Activated CD8-positive, alpha-beta T cell treated with anti-CD3 and anti-CD28 coated beads for 36 hours (primary cell): ENCODE measurements at regions of chr6 and their contacts with region 1.

Region 1: GRCh38 chr6:26156076-26156849 is 69.0 kb downstream of the HFE start:
- DNase-seq: peak; percentile 87
- ATAC-seq: peak; percentile 41
- H3K4me3 Mint-ChIP-seq: peak overlapping the region; percentile 88
- H3K27ac Mint-ChIP-seq: peak overlapping the region; percentile 93
- H3K4me1 Mint-ChIP-seq: peaks cover 36% of the 10 kb centered on the region
- H3K27me3 Mint-ChIP-seq: peaks cover 14% of the 10 kb centered on the region
- CTCF ChIP-seq: no peak

Region 2: GRCh38 chr6:26006086-26006939 is 149.9 kb before region 1 on chr6:
- CTCF ChIA-PET with region 1: no interaction called
- POLR2A ChIA-PET with region 1: no interaction called
- intact Hi-C with region 1: no loop called
- DNase-seq: no peak
- ATAC-seq: no peak
- H3K4me3 Mint-ChIP-seq: no peak overlapping the region
- H3K27ac Mint-ChIP-seq: no peak overlapping the region
- H3K4me1 Mint-ChIP-seq: no peaks in the 10 kb centered on the region
- H3K27me3 Mint-ChIP-seq: no peaks in the 10 kb centered on the region
- CTCF ChIP-seq: no peak

Region 3: DNA sequence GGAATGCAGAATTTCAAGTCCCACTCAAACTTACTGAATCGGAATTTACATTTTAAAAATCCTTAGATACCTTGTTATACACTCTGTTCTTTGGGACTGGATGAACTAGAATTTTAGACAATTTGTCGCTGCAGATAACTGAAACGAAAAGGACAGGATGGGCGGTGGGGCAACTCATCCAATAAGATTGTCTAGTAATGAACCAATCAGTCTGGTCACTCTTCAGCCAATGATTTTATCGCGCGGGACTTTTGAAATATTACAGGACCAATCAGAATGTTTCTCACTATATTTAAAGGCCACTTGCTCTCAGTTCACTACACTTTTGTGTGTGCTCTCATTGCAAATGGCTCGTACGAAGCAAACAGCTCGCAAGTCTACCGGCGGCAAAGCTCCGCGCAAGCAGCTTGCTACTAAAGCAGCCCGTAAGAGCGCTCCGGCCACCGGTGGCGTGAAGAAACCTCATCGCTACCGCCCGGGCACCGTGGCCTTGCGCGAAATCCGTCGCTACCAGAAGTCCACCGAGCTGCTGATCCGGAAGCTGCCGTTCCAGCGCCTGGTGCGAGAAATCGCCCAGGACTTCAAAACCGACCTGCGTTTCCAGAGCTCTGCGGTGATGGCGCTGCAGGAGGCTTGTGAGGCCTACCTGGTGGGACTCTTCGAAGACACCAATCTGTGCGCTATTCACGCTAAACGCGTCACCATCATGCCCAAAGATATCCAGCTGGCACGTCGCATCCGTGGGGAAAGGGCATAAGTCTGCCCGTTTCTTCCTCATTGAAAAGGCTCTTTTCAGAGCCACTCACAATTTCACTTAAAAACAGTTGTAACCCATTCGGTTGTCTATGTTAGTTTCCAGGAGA is 111.0 kb before region 1 on chr6:
- CTCF ChIA-PET with region 1: no interaction called
- POLR2A ChIA-PET with region 1: interaction called, 59 read pairs
- intact Hi-C with region 1: no loop called
- DNase-seq: peak; percentile 85
- ATAC-seq: peak; percentile 63
- H3K4me3 Mint-ChIP-seq: peak overlapping the region; percentile 76
- H3K27ac Mint-ChIP-seq: peak overlapping the region; percentile 96
- H3K4me1 Mint-ChIP-seq: peaks cover 10% of the 10 kb centered on the region
- H3K27me3 Mint-ChIP-seq: no peaks in the 10 kb centered on the region
- CTCF ChIP-seq: no peak

Region 4: GRCh38 chr6:26122793-26123674 is 33.2 kb before region 1 on chr6:
- CTCF ChIA-PET with region 1: interaction called, 14 read pairs
- POLR2A ChIA-PET with region 1: interaction called, 1,225 read pairs
- intact Hi-C with region 1: loop called (anchors 1 kb)
- DNase-seq: peak; percentile 98
- ATAC-seq: peak; percentile 60
- H3K4me3 Mint-ChIP-seq: peak overlapping the region; percentile 84
- H3K27ac Mint-ChIP-seq: peak overlapping the region; percentile 98
- H3K4me1 Mint-ChIP-seq: peaks cover 27% of the 10 kb centered on the region
- H3K27me3 Mint-ChIP-seq: no peaks in the 10 kb centered on the region
- CTCF ChIP-seq: no peak

Region 5: DNA sequence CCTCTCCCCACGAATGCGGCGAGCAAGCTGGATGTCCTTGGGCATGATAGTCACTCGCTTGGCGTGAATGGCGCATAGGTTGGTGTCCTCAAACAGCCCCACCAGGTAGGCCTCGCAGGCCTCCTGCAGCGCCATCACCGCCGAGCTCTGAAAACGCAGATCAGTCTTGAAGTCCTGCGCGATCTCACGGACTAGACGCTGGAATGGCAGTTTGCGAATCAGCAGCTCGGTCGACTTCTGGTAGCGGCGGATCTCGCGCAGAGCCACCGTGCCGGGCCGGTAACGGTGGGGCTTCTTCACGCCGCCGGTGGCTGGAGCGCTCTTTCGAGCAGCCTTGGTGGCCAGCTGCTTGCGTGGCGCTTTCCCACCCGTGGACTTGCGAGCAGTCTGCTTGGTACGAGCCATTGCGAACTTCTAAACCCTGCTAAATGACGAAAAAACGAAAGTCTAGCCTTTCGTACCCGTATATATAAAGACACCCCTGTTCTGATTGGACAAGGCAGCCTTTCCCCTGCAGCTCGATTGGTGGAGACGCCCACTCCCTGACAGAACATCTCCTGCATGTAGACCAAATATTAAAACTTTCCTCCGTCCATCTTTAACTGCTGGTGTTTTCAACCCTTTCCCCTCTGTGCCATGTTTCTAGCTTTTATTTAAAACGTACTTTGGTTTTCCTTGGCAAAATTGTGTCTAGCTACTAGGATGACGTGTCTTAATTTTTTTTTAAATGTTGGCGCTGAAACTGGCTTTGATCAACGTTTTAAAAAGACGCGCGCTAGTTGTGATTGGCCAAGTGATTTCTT is 40.8 kb after region 1 on chr6:
- CTCF ChIA-PET with region 1: interaction called, 4 read pairs
- POLR2A ChIA-PET with region 1: interaction called, 826 read pairs
- intact Hi-C with region 1: loop called (anchors 5 kb)
- DNase-seq: peak; percentile 86
- ATAC-seq: peak; percentile 48
- H3K4me3 Mint-ChIP-seq: peak overlapping the region; percentile 96
- H3K27ac Mint-ChIP-seq: peak overlapping the region; percentile 96
- H3K4me1 Mint-ChIP-seq: peaks cover 24% of the 10 kb centered on the region
- H3K27me3 Mint-ChIP-seq: no peaks in the 10 kb centered on the region
- CTCF ChIP-seq: no peak

Region 6: DNA sequence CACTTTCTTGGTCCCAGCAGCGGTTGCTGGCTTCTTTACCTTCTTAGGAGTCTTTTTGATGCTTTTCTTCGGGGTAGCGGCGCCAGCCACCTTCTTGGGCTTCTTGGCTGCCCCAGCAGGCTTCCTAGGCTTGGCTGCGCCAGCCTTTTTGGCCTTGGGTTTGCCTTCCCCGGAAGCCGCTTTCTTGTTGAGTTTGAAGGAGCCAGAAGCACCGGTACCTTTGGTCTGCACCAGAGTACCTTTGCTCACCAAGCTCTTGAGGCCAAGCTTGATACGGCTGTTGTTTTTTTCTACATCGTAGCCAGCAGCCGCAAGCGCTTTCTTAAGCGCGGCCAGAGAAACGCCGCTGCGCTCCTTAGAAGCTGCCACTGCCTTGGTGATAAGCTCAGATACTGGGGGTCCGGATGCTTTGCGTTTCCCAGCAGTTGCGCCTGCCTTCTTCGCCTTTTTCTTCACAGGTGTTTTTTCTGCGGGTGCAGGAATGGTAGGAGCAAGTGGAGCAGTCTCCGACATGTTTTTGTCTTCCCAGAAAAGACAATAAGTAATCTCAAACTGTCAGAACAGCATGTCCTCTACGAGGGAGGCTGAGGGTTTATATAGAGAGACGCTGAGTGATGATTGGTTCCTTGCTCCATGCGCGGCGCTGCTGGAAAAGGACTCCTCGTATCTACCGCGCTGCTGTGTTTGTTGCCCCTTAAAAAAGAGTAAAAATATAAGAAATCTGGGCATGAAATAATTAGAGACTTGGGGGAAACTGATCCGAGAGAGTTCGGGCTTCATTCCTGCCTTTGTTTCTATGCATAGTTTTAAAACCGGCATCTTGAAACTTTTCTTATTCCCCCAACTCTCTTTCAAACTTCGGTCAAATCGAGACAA is 78.4 kb after region 1 on chr6:
- CTCF ChIA-PET with region 1: no interaction called
- POLR2A ChIA-PET with region 1: interaction called, 138 read pairs
- intact Hi-C with region 1: no loop called
- DNase-seq: peak; percentile 86
- ATAC-seq: peak; percentile 65
- H3K4me3 Mint-ChIP-seq: peak overlapping the region; percentile 75
- H3K27ac Mint-ChIP-seq: peak overlapping the region; percentile 99
- H3K4me1 Mint-ChIP-seq: peaks cover 24% of the 10 kb centered on the region
- H3K27me3 Mint-ChIP-seq: peaks cover 5% of the 10 kb centered on the region
- CTCF ChIP-seq: no peak

Region 7: GRCh38 chr6:26363882-26364701 is 207.8 kb after region 1 on chr6:
- CTCF ChIA-PET with region 1: no interaction called
- POLR2A ChIA-PET with region 1: no interaction called
- intact Hi-C with region 1: no loop called
- DNase-seq: peak; percentile 24
- ATAC-seq: no peak
- H3K4me3 Mint-ChIP-seq: no peak overlapping the region
- H3K27ac Mint-ChIP-seq: no peak overlapping the region
- H3K4me1 Mint-ChIP-seq: peaks cover 57% of the 10 kb centered on the region
- H3K27me3 Mint-ChIP-seq: no peaks in the 10 kb centered on the region
- CTCF ChIP-seq: no peak

Region 8: GRCh38 chr6:27132532-27133280 is 976.4 kb after region 1 on chr6:
- CTCF ChIA-PET with region 1: no interaction called
- POLR2A ChIA-PET with region 1: interaction called, 48 read pairs
- intact Hi-C with region 1: no loop called
- DNase-seq: peak; percentile 93
- ATAC-seq: peak; percentile 82
- H3K4me3 Mint-ChIP-seq: no peak overlapping the region
- H3K27ac Mint-ChIP-seq: no peak overlapping the region
- H3K4me1 Mint-ChIP-seq: peaks cover 18% of the 10 kb centered on the region
- H3K27me3 Mint-ChIP-seq: no peaks in the 10 kb centered on the region
- CTCF ChIP-seq: no peak